ENCODE measurements at regions of chr5 and their contacts with region 1.

Region 1: GRCh38 chr5:95846554-95847260 is 24.2 kb upstream of the GLRX start:
- DNase-seq: peak; percentile 68 to 71
- H3K4me3 ChIP-seq: no peak overlapping the region
- H3K27ac ChIP-seq: no peak overlapping the region
- H3K4me1 ChIP-seq: no peaks in the 10 kb centered on the region
- H3K27me3 ChIP-seq: no peaks in the 10 kb centered on the region
- CTCF ChIP-seq: peak; percentile 92 to 95 (median 94)
- POLR2A ChIP-seq: no peak

Region 2: GRCh38 chr5:95646554-95647431 is 199.9 kb before region 1 on chr5 and contains the start of gene RFESD:
- intact Hi-C with region 1: loop called (anchors 10 kb)
- DNase-seq: peak; percentile 98
- H3K4me3 ChIP-seq: peak within 1 kb of the TSS; percentile 44 to 58
- H3K27ac ChIP-seq: peak within 1 kb of the TSS; percentile 86 to 93
- H3K4me1 ChIP-seq: no peaks in the 10 kb centered on the region
- H3K27me3 ChIP-seq: no peaks in the 10 kb centered on the region
- CTCF ChIP-seq: peak in 2 of 4 experiments; percentile 19 to 28
- POLR2A ChIP-seq: peak; percentile 90 to 94
- total RNA-seq, gene RFESD: under 0.01 to 2.8 (median 2.2) TPM in 3 of 4 donors, not detected in the other

Region 3: GRCh38 chr5:95697781-95698681 is 148.7 kb before region 1 on chr5:
- intact Hi-C with region 1: no loop called
- DNase-seq: no peak
- H3K4me3 ChIP-seq: no peak overlapping the region
- H3K27ac ChIP-seq: no peak overlapping the region
- H3K4me1 ChIP-seq: no peaks in the 10 kb centered on the region
- H3K27me3 ChIP-seq: no peaks in the 10 kb centered on the region
- CTCF ChIP-seq: no peak
- POLR2A ChIP-seq: no peak

Region 4: DNA sequence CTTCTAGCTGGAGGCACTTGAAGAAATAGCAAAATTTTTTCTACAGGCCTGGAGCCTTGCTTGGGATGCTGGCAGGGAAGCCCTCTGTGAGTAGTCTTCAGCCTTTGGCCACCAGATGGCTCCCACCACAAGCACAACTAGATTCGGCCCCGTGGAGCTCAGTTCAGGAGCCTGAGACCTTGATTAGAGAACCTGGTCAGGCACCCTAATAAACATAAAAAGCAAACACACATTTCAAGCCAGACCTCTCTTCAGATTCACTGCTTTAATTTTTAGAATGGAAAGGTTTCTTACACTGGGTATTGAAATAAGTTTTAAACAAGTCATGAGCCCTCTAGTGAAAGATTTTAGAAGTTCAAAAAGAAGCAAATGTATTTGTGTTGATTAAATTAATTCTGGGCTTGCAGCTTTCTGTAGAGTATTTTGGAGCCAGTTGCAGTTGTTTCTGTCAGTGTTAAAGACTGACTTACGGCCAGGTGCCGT is 65.6 kb before region 1 on chr5:
- intact Hi-C with region 1: loop called (anchors 5 kb)
- DNase-seq: peak; percentile 80 to 85
- H3K4me3 ChIP-seq: no peak overlapping the region
- H3K27ac ChIP-seq: peak overlapping the region; percentile 52 to 66
- H3K4me1 ChIP-seq: no peaks in the 10 kb centered on the region
- H3K27me3 ChIP-seq: no peaks in the 10 kb centered on the region
- CTCF ChIP-seq: peak; percentile 81 to 87 (median 84)
- POLR2A ChIP-seq: no peak

Region 5: GRCh38 chr5:95939465-95939864 is 92.8 kb after region 1 on chr5:
- intact Hi-C with region 1: no loop called
- DNase-seq: no peak
- H3K4me3 ChIP-seq: no peak overlapping the region
- H3K27ac ChIP-seq: no peak overlapping the region
- H3K4me1 ChIP-seq: no peaks in the 10 kb centered on the region
- H3K27me3 ChIP-seq: no peaks in the 10 kb centered on the region
- CTCF ChIP-seq: no peak
- POLR2A ChIP-seq: no peak

Measured in uterus (tissue), 4 donors.